ENCODE measurements at regions of chr17 and their contacts with region 1.

Region 1: DNA sequence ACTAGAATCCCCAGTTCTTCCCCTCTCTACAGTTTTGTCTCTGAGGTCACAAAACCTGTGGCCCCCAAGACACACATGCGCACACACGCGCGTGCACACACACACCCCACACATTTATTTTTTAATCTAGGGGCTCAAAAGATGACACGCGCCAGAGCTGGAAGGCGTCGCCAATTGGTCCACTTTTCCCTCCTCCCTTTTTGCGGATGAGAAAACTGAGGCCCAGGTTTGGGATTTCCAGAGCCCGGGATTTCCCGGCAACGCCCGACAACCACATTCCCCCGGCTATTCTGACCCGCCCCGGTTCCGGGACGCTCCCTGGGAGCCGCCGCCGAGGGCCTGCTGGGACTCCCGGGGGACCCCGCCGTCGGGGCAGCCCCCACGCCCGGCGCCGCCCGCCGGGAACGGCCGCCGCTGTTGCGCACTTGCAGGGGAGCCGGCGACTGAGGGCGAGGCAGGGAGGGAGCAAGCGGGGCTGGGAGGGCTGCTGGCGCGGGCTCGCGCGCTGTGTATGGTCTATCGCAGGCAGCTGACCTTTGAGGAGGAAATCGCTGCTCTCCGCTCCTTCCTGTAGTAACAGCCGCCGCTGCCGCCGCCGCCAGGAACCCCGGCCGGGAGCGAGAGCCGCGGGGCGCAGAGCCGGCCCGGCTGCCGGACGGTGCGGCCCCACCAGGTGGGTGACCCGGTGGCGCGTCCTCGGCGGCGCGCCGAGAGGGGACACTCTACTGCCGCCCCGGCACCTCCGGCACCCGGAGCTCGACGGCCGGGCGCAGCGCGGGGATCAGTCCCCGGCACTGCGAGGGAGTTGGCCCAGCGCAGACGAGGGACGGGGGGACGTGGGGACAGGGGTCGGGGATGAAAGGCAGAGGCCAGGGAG is at the start of gene STAT5A:
- DNase-seq: peak; percentile 86
- H3K4me3 Mint-ChIP-seq: peak within 1 kb of the TSS; percentile 82
- H3K27ac Mint-ChIP-seq: peak within 1 kb of the TSS; percentile 94
- H3K4me1 Mint-ChIP-seq: peaks cover 60% of the 10 kb centered on the region
- H3K27me3 Mint-ChIP-seq: no peaks in the 10 kb centered on the region
- total RNA-seq, gene STAT5A: 211 to 215 TPM

Region 2: GRCh38 chr17:42248351-42249179 is 39.6 kb before region 1 on chr17:
- CTCF ChIA-PET with region 1: interaction called, 4 read pairs
- POLR2A ChIA-PET with region 1: interaction called, 56 read pairs
- intact Hi-C with region 1: loop called (anchors 1 kb)
- DNase-seq: peak; percentile 88
- H3K4me3 Mint-ChIP-seq: peak overlapping the region; percentile 73
- H3K27ac Mint-ChIP-seq: peak overlapping the region; percentile 95
- H3K4me1 Mint-ChIP-seq: peaks cover 68% of the 10 kb centered on the region
- H3K27me3 Mint-ChIP-seq: no peaks in the 10 kb centered on the region

Region 3: GRCh38 chr17:42266918-42267778 is 21.0 kb before region 1 on chr17:
- CTCF ChIA-PET with region 1: interaction called, 3 read pairs
- POLR2A ChIA-PET with region 1: interaction called, 54 read pairs
- intact Hi-C with region 1: loop called (anchors 1 kb)
- DNase-seq: peak; percentile 66
- H3K4me3 Mint-ChIP-seq: peak overlapping the region; percentile 21
- H3K27ac Mint-ChIP-seq: peak overlapping the region; percentile 97
- H3K4me1 Mint-ChIP-seq: peaks cover 57% of the 10 kb centered on the region
- H3K27me3 Mint-ChIP-seq: no peaks in the 10 kb centered on the region

Region 4: GRCh38 chr17:42276359-42276608 is 11.9 kb before region 1 on chr17 and contains the start of gene STAT5B:
- CTCF ChIA-PET with region 1: interaction called, 9 read pairs
- POLR2A ChIA-PET with region 1: interaction called, 54 read pairs
- intact Hi-C with region 1: loop called (anchors 1 kb)
- DNase-seq: peak; percentile 74
- H3K4me3 Mint-ChIP-seq: peak within 1 kb of the TSS; percentile 93
- H3K27ac Mint-ChIP-seq: peak within 1 kb of the TSS; percentile 97
- H3K4me1 Mint-ChIP-seq: peaks cover 34% of the 10 kb centered on the region
- H3K27me3 Mint-ChIP-seq: no peaks in the 10 kb centered on the region
- total RNA-seq, gene STAT5B: 192 to 195 TPM

Region 5: GRCh38 chr17:42312285-42313130 is 24.3 kb after region 1 on chr17:
- CTCF ChIA-PET with region 1: interaction called, 4 read pairs
- POLR2A ChIA-PET with region 1: interaction called, 14 read pairs
- intact Hi-C with region 1: loop called (anchors 2 kb)
- DNase-seq: peak; percentile 92
- H3K4me3 Mint-ChIP-seq: peak overlapping the region; percentile 42
- H3K27ac Mint-ChIP-seq: peak overlapping the region; percentile 74
- H3K4me1 Mint-ChIP-seq: peaks cover 76% of the 10 kb centered on the region
- H3K27me3 Mint-ChIP-seq: no peaks in the 10 kb centered on the region

Region 6: GRCh38 chr17:42456223-42457131 is 168.3 kb after region 1 on chr17:
- CTCF ChIA-PET with region 1: no interaction called
- POLR2A ChIA-PET with region 1: no interaction called
- intact Hi-C with region 1: no loop called
- DNase-seq: no peak
- H3K4me3 Mint-ChIP-seq: peak overlapping the region; percentile 20
- H3K27ac Mint-ChIP-seq: no peak overlapping the region
- H3K4me1 Mint-ChIP-seq: peaks cover 41% of the 10 kb centered on the region
- H3K27me3 Mint-ChIP-seq: peaks cover 4% of the 10 kb centered on the region

Region 7: DNA sequence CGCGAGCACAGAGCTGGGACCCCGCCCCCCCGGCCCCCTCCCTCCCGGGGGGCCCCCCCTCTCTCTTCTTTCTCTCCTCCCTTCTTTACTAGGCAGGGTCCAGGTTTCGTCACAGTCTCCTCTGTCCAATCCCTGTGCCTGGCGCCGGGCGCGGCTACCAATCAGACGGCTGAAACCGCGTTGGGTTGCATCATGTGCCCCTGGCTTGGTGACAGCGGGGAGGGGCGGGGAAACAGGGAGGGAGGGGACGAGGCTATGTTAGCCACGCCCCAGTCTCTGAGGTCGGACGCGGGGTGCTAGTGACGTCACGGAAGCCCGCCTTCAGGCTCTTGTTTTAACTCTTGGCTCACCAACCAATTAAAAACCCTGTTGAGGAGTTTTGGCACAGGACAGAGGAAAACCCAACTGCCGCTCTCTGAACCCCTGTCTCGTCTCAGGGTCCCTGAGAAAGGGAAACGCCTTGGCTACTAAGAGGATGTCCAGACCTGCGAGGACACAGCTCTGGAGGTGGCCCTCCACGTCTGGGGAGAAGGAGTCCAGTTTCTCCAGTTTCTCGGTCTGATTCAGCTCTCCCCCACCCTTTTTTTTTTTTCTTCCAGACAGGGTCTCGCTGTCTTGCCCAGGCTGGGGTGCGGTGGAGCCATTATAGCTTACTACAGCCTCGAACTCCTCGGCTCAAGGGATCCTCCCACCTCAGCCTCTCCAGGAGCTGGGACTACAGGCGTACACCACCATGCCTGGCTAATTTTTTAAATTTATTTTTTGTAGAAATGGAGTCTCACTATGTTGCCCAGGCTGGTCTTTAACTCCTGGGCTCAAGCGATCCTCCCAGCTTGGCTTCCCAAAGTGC is 389.1 kb after region 1 on chr17:
- CTCF ChIA-PET with region 1: no interaction called
- POLR2A ChIA-PET with region 1: no interaction called
- intact Hi-C with region 1: loop called (anchors 10 kb)
- DNase-seq: peak; percentile 100
- H3K4me3 Mint-ChIP-seq: peak overlapping the region; percentile 76
- H3K27ac Mint-ChIP-seq: peak overlapping the region; percentile 71
- H3K4me1 Mint-ChIP-seq: peaks cover 54% of the 10 kb centered on the region
- H3K27me3 Mint-ChIP-seq: peaks cover 41% of the 10 kb centered on the region